OCI-LY7 (cell line): ENCODE measurements at regions of chr1 and their contacts with region 1.

Region 1: DNA sequence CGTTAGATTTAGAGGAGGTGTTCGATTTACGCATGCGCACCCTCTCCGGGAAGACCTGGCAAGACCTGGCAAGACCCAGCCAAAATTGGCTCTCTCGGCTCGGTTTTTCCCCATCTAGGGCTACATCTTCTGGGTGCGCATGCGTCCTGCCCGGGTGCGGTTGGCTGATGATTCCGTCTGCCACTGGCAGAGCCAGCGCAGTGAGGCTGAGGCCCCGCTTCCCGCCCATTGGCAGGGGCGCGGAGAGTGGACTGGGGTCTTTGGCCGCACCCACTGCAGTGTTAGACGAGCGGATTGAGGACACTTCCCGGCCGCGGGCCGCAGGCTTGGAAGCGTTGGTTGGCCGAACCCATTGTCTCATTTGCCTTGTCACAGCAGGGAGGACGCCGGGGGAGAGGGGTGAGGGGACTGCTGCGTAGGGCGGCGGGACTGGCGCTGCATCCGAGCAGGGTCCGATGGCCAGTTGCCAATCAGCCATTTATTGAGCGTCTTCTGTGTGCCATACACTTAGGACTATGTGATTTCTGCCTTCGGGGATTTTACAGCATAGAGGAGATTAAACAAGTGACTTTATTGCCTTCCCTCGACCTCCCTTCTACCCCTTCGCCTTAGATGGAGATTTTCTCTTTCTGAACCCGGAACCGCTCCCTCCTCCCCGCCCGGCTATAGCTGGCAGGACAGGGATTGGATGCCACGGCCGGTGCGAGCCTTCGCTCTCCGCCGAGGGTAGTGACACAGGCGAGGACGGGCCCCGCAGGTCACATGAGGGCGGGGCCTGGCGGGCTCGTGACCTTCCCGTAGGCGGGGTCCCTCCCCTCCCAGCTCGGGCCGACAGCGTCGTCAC is 43.7 kb downstream of the MEF2D start:
- DNase-seq: peak; percentile 97
- H3K4me3 ChIP-seq: peak overlapping the region; percentile 66
- H3K27ac ChIP-seq: peak overlapping the region; percentile 82
- H3K4me1 ChIP-seq: peaks cover 20% of the 10 kb centered on the region
- CTCF ChIP-seq: 0 out of 2 replicates have a peak, but pooled peaks have one; percentile 6

Region 2: GRCh38 chr1:156489166-156489934 is 32.5 kb after region 1 on chr1:
- CTCF ChIA-PET with region 1: interaction called, 6 read pairs
- POLR2A ChIA-PET with region 1: interaction called, 10 read pairs
- intact Hi-C with region 1: no loop called
- DNase-seq: peak; percentile 67
- H3K4me3 ChIP-seq: peak overlapping the region; percentile 98
- H3K27ac ChIP-seq: peak overlapping the region; percentile 98
- H3K4me1 ChIP-seq: peaks cover 93% of the 10 kb centered on the region
- CTCF ChIP-seq: no peak; the same call in 1 of the 2 replicates

Region 3: GRCh38 chr1:156583821-156584622 is 127.2 kb after region 1 on chr1:
- CTCF ChIA-PET with region 1: interaction called, 3 read pairs
- POLR2A ChIA-PET with region 1: interaction called, 7 read pairs
- intact Hi-C with region 1: loop called (anchors 2 kb)
- DNase-seq: peak; percentile 90
- H3K4me3 ChIP-seq: peak overlapping the region; percentile 62
- H3K27ac ChIP-seq: peak overlapping the region; percentile 40
- H3K4me1 ChIP-seq: peaks cover 39% of the 10 kb centered on the region
- CTCF ChIP-seq: peak; percentile 88

Region 4: GRCh38 chr1:156601122-156601830 is 144.4 kb after region 1 on chr1 and contains the start of gene GPATCH4:
- CTCF ChIA-PET with region 1: no interaction called
- POLR2A ChIA-PET with region 1: interaction called, 7 read pairs
- intact Hi-C with region 1: loop called (anchors 1 kb)
- DNase-seq: peak; percentile 86
- H3K4me3 ChIP-seq: peak within 1 kb of the TSS; percentile 78
- H3K27ac ChIP-seq: peak within 1 kb of the TSS; percentile 69
- H3K4me1 ChIP-seq: peaks cover 26% of the 10 kb centered on the region
- CTCF ChIP-seq: no peak
- total RNA-seq, gene GPATCH4: 33.3 and 40.9 TPM in 2 replicates